GM12878 (cell line): ENCODE measurements at regions of chr2 and their contacts with region 1.

Region 1: DNA sequence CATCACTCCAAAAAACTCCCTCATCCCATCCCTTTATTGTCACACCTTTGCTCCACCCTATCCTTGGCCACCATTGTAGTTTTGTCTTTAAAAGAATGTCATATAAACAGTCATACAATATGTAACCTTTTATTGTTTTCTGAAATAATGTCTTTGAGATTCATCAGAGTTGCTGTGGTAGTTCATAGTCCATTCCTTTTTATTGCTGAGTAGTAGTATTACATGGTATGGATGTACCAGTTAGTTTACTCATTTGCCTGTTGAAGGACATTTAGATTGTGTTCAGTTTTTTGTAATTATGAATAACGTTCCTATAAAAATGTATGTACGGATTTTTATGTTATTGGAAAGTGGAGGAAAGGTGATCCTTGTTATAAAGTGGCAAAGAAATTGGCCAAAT is 171.8 kb upstream of the GCFC2 start:
- DNase-seq: no peak
- ATAC-seq: no peak
- H3K4me3 ChIP-seq: no peak overlapping the region
- H3K27ac ChIP-seq: no peak overlapping the region
- H3K4me1 ChIP-seq: no peaks in the 10 kb centered on the region; the same call in 1 of the 2 replicates
- H3K27me3 ChIP-seq: no peaks in the 10 kb centered on the region
- CTCF ChIP-seq: no peak
- EP300 ChIP-seq: no peak
- POLR2A ChIP-seq: no peak
- RAD21 ChIP-seq: no peak

Region 2: DNA sequence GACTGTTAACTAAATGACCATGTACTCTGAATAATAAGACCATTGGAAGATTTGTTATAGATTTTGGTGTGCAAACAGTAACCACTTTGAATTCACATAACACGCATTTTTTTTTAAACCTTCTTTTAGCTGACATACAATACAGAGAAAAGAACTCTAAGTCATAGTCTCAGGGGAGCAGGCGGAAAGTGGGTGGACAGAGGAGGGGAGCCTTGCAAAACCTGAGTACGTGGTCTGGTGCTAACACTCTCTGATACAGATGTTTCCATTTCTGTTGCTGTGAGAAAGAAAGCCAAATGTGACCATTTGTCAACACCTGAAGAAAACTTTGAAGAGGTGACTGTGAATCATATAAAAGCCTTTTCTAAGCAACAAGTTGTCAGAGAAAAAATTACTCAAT is 20.0 kb before region 1 on chr2:
- CTCF ChIA-PET with region 1: no interaction called
- POLR2A ChIA-PET with region 1: no interaction called
- RAD21 ChIA-PET with region 1: no interaction called
- SMC1A ChIA-PET with region 1: no interaction called
- in situ Hi-C with region 1: no loop called
- intact Hi-C with region 1: no loop called
- DNase-seq: no peak
- ATAC-seq: no peak
- H3K4me3 ChIP-seq: no peak overlapping the region
- H3K27ac ChIP-seq: no peak overlapping the region
- H3K4me1 ChIP-seq: no peaks in the 10 kb centered on the region
- H3K27me3 ChIP-seq: no peaks in the 10 kb centered on the region
- CTCF ChIP-seq: no peak
- EP300 ChIP-seq: no peak
- POLR2A ChIP-seq: no peak
- RAD21 ChIP-seq: no peak

Region 3: DNA sequence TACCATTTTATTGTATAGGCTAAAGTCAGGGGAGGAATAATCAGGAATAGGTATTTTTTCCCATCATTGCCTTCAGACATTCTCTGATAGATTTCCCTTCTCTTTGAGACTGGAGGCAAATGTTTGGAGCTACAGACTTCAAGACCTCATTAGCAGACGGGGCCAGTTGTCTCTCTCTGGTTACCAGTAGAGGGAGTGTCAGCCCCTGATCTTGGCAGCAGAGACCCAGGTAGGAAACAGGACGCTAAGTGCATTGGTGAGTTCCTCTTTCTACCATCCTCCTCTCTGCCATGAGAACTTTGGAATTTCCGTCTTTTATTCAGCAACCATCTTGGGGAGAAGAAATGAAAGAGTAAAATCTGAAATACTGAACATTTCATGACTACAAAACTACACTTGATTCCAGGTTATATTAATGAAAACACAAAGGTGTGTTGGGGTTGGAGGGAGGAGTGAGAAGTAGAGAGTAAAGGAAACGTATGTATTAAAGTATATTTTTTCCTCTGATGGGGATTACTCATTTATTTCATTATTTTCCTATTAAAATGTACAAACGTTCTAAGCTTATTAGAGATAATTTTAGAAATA is 14.3 kb after region 1 on chr2:
- CTCF ChIA-PET with region 1: interaction called, 12 read pairs
- POLR2A ChIA-PET with region 1: no interaction called
- RAD21 ChIA-PET with region 1: no interaction called
- SMC1A ChIA-PET with region 1: no interaction called
- in situ Hi-C with region 1: no loop called
- intact Hi-C with region 1: no loop called
- DNase-seq: no peak
- ATAC-seq: peak; percentile 92
- H3K4me3 ChIP-seq: no peak overlapping the region
- H3K27ac ChIP-seq: no peak overlapping the region
- H3K4me1 ChIP-seq: no peaks in the 10 kb centered on the region
- H3K27me3 ChIP-seq: no peaks in the 10 kb centered on the region
- CTCF ChIP-seq: peak; percentile 74 to 88 (median 79)
- EP300 ChIP-seq: no peak
- POLR2A ChIP-seq: no peak
- RAD21 ChIP-seq: peak; percentile 59

Region 4: GRCh38 chr2:76008001-76008702 is 125.6 kb after region 1 on chr2:
- CTCF ChIA-PET with region 1: no interaction called
- POLR2A ChIA-PET with region 1: no interaction called
- RAD21 ChIA-PET with region 1: no interaction called
- SMC1A ChIA-PET with region 1: no interaction called
- in situ Hi-C with region 1: no loop called
- intact Hi-C with region 1: no loop called
- DNase-seq: peak; percentile 45
- ATAC-seq: peak; percentile 97
- H3K4me3 ChIP-seq: no peak overlapping the region
- H3K27ac ChIP-seq: no peak overlapping the region
- H3K4me1 ChIP-seq: no peaks in the 10 kb centered on the region
- H3K27me3 ChIP-seq: no peaks in the 10 kb centered on the region
- CTCF ChIP-seq: no peak
- EP300 ChIP-seq: no peak
- POLR2A ChIP-seq: no peak
- RAD21 ChIP-seq: no peak